AG04450 (cell line): ENCODE measurements at regions of chr13 and their contacts with region 1.

Region 1: DNA sequence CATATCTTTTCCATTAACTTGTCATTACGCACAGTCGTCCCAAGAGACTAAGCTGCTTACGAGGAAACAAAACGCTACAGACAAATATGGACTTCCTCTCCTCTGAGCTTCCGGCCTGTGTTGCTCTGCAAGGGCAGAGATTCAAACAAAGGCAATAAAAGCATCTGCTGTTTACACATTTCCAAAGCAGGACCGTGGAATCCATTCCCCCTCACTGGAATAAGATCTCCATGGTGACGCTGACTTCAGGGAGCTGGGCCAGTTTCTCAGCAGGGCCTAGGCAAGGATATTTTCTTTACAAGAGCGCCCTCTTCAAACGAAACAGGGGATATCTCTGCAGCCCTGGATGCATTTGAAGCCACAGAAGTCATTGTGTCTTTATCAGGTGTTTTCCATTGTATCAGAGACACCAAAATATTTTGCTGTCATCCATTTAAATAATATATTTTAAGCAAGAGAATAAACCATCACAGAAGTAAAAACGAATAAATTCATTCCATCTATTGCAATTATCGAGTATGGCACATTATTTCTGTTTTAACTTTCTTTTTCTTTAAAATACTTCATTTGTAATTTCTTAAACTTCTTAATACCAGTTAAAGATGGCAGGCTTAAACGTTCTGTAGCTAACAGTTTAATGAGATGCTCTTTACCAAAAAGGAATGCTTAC is 177.5 kb downstream of the DCLK1 start:
- DNase-seq: peak; percentile 79
- H3K4me3 ChIP-seq: peak overlapping the region; percentile 21
- H3K27ac ChIP-seq: no peak overlapping the region
- H3K27me3 ChIP-seq: peaks cover 1% of the 10 kb centered on the region
- CTCF ChIP-seq: peak; percentile 73

Region 2: GRCh38 chr13:35720690-35721554 is 232.8 kb before region 1 on chr13:
- CTCF ChIA-PET with region 1: interaction called, 25 read pairs
- POLR2A ChIA-PET with region 1: no interaction called
- DNase-seq: no peak
- H3K4me3 ChIP-seq: peak overlapping the region; percentile 47
- H3K27ac ChIP-seq: no peak overlapping the region
- H3K27me3 ChIP-seq: peaks cover 2% of the 10 kb centered on the region
- CTCF ChIP-seq: peak; percentile 100

Region 3: GRCh38 chr13:35978603-35979316 is 25.1 kb after region 1 on chr13:
- CTCF ChIA-PET with region 1: interaction called, 16 read pairs
- POLR2A ChIA-PET with region 1: no interaction called
- DNase-seq: no peak
- H3K4me3 ChIP-seq: no peak overlapping the region
- H3K27ac ChIP-seq: peak overlapping the region; percentile 43
- H3K27me3 ChIP-seq: no peaks in the 10 kb centered on the region
- CTCF ChIP-seq: peak; percentile 69

Region 4: DNA sequence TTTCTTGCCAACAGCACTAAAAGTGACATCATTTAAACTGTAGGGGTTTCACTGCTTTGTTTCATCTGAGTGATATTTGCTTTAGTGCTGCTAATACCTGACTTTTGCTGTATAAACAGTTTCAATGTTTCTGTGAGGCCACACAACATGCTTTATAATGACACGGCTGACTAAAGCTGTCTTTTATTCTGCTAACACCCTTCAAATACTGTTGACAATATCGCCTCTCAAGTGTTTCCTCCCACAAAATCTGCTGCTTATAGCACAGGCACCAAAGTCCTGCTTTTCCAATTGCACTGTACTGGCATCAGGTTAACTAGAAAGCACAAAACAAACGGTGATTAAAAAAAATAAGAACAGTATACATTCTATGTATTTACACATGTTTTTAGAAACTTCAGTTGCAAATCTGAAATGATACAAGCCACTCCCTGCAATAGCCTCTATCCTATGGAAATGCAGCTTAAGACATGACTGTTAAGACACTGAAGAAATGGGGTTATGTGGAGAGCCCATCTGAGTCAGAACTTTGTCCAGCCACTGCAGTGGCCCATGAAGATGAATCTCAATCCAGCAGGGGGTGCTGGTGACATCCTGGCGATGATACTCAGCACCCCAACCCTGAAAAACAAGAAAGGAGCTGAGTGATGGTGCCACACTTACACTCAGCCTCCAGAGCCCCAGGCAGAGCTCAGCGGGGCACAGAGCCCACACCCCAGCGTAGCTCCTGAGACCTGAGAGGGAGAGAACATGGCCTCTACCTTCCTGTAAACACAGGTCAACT is 894.7 kb after region 1 on chr13:
- CTCF ChIA-PET with region 1: no interaction called
- POLR2A ChIA-PET with region 1: no interaction called
- DNase-seq: no peak
- H3K4me3 ChIP-seq: no peak overlapping the region
- H3K27ac ChIP-seq: no peak overlapping the region
- H3K27me3 ChIP-seq: no peaks in the 10 kb centered on the region
- CTCF ChIP-seq: 0 out of 2 replicates have a peak, but pooled peaks have one; percentile 20